ENCODE measurements at regions of chr9 and their contacts with region 1.

Region 1: GRCh38 chr9:121992571-121993212 is 100.4 kb downstream of the TTLL11 start:
- DNase-seq: no peak
- ATAC-seq: peak; percentile 80
- H3K4me3 Mint-ChIP-seq: no peak overlapping the region
- H3K27ac Mint-ChIP-seq: no peak overlapping the region
- H3K4me1 Mint-ChIP-seq: no peaks in the 10 kb centered on the region
- H3K27me3 Mint-ChIP-seq: no peaks in the 10 kb centered on the region
- CTCF ChIP-seq: peak; percentile 51

Region 2: DNA sequence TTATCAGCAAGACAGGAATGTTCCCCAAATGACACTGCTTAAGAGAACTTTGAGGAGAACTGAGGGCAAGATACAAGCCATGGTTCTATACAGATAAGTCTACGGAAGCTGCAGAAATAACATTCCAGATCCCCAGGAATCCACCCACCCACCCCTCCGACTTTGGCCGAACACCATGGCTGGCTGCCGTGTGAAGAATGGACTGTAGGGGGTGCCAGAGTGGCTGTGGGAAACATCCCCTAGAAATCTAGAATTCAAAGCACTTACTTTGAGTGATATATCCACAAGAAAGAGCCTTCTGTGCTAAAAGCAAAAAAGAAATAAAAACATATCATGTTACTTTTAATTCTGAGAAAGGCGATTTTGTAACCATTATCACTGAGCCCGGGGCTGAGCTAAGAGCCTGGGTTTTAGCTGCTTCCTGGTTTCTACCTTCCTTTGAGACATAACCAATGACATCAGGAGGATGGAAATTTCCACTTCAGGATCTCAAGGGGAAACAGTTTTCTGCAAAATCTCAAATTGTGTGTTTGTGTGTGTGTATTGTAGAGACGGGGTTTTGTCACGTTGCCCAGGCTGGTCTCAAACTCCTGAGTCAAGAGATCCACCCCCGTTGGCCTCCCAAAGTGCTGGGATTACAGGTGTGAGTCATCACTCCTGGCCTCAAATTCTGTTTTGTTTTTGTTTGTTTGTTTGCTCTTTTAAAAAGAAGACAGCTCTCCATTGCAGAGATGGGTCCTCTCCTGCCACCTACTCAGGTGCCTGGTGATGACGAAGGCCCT is 529.5 kb before region 1 on chr9:
- CTCF ChIA-PET with region 1: no interaction called
- POLR2A ChIA-PET with region 1: no interaction called
- intact Hi-C with region 1: loop called (anchors 5 kb)
- DNase-seq: no peak
- ATAC-seq: peak; percentile 58
- H3K4me3 Mint-ChIP-seq: no peak overlapping the region
- H3K27ac Mint-ChIP-seq: no peak overlapping the region
- H3K4me1 Mint-ChIP-seq: no peaks in the 10 kb centered on the region
- H3K27me3 Mint-ChIP-seq: peaks cover 35% of the 10 kb centered on the region
- CTCF ChIP-seq: no peak

Region 3: GRCh38 chr9:121474231-121474891 is 518.3 kb before region 1 on chr9:
- CTCF ChIA-PET with region 1: no interaction called
- POLR2A ChIA-PET with region 1: no interaction called
- intact Hi-C with region 1: no loop called
- DNase-seq: no peak
- ATAC-seq: no peak
- H3K4me3 Mint-ChIP-seq: no peak overlapping the region
- H3K27ac Mint-ChIP-seq: no peak overlapping the region
- H3K4me1 Mint-ChIP-seq: no peaks in the 10 kb centered on the region
- H3K27me3 Mint-ChIP-seq: peaks cover 21% of the 10 kb centered on the region
- CTCF ChIP-seq: no peak

Region 4: GRCh38 chr9:121545875-121546423 is 446.7 kb before region 1 on chr9:
- CTCF ChIA-PET with region 1: interaction called, 8 read pairs
- POLR2A ChIA-PET with region 1: no interaction called
- intact Hi-C with region 1: loop called (anchors 1 kb)
- DNase-seq: peak; percentile 68
- ATAC-seq: peak; percentile 86
- H3K4me3 Mint-ChIP-seq: no peak overlapping the region
- H3K27ac Mint-ChIP-seq: no peak overlapping the region
- H3K4me1 Mint-ChIP-seq: no peaks in the 10 kb centered on the region
- H3K27me3 Mint-ChIP-seq: peaks cover 24% of the 10 kb centered on the region
- CTCF ChIP-seq: no peak

Region 5: DNA sequence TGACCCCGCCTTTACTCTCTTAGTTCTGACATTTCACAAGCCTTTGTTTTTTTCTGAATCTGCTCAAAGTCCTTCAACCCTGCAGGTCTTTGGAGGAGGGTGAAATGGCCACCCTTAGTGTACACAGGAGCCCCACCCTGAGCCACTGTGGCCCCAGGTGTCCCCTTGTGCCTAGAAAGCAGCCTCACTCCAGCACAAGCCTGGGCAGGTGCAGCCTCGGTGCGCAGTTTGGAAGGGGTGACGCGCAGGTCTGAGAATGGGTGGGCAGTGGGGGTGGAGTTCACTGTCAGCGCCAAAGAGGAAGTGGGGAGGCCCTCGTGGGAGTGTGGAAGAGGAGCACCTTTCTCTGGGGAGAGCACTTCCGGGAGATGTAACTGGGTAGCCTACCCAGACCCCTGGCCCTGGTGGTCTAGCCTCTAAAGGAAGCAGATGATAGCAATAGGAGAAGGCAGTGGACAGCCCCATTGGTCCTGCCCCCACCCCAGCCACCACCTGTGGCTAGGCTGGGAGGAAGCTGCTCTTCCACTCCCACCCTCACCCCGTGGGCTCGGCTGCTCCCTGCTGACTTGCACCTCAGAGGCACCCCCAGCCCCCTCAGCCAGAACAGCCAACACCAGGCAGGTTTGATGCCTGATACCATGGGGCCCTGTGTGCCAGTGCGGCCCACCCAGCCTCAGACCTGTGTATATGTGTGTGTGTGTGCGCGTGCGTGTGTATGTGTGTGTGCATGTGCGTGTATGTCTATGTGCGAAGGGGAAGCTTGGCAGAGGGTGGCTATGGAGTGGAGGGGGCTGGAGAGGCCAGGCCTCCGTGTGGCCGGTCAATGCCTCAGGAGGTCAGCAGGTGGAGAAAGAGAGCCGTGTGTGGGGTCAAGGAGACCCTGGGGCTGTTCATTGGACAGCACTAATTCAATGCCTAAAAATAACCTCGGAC is 358.1 kb before region 1 on chr9:
- CTCF ChIA-PET with region 1: no interaction called
- POLR2A ChIA-PET with region 1: no interaction called
- intact Hi-C with region 1: loop called (anchors 1 kb)
- DNase-seq: no peak
- ATAC-seq: no peak
- H3K4me3 Mint-ChIP-seq: no peak overlapping the region
- H3K27ac Mint-ChIP-seq: no peak overlapping the region
- H3K4me1 Mint-ChIP-seq: peaks cover 4% of the 10 kb centered on the region
- H3K27me3 Mint-ChIP-seq: peaks cover 20% of the 10 kb centered on the region
- CTCF ChIP-seq: no peak

Region 6: DNA sequence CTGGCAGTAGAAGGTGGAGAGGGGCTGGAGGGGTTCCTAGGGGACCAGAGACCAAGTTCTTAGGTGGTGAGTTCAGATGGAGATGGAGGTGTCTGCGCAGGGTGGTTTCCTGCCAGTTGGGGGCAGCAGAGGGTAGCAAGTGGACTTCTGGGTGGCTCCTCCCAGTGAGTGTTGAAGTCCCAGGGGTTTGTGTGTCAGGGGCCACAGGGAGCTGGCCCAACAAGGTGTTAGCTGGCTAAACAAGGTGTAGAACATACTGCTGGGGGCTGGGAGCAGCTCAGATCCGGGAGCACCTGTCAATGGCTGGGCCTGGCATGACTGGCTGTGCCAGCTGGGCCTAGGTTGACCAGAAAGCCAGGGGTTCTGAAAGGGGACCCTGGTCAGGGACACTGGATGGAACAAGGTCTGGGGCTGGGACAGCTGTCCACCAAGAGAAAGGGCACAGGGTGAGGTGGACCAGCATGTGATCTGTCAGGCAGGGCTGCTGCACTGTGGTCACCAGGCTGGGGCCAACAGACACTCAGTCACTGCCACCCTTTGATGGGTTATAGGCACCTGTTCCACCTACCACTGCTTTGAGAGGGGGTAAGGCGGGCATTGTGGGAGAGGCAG is 305.7 kb before region 1 on chr9:
- CTCF ChIA-PET with region 1: interaction called, 5 read pairs
- POLR2A ChIA-PET with region 1: no interaction called
- intact Hi-C with region 1: loop called (anchors 1 kb)
- DNase-seq: peak; percentile 57
- ATAC-seq: peak; percentile 90
- H3K4me3 Mint-ChIP-seq: no peak overlapping the region
- H3K27ac Mint-ChIP-seq: no peak overlapping the region
- H3K4me1 Mint-ChIP-seq: no peaks in the 10 kb centered on the region
- H3K27me3 Mint-ChIP-seq: peaks cover 14% of the 10 kb centered on the region
- CTCF ChIP-seq: no peak

Region 7: GRCh38 chr9:121735065-121735789 is 257.5 kb before region 1 on chr9:
- CTCF ChIA-PET with region 1: interaction called, 5 read pairs
- POLR2A ChIA-PET with region 1: no interaction called
- intact Hi-C with region 1: loop called (anchors 1 kb)
- DNase-seq: no peak
- ATAC-seq: peak; percentile 75
- H3K4me3 Mint-ChIP-seq: peak overlapping the region; percentile 3
- H3K27ac Mint-ChIP-seq: no peak overlapping the region
- H3K4me1 Mint-ChIP-seq: peaks cover 15% of the 10 kb centered on the region
- H3K27me3 Mint-ChIP-seq: peaks cover 20% of the 10 kb centered on the region
- CTCF ChIP-seq: no peak

Region 8: GRCh38 chr9:121744002-121744686 is 248.5 kb before region 1 on chr9:
- CTCF ChIA-PET with region 1: no interaction called
- POLR2A ChIA-PET with region 1: no interaction called
- intact Hi-C with region 1: loop called (anchors 1 kb)
- DNase-seq: no peak
- ATAC-seq: peak; percentile 62
- H3K4me3 Mint-ChIP-seq: no peak overlapping the region
- H3K27ac Mint-ChIP-seq: no peak overlapping the region
- H3K4me1 Mint-ChIP-seq: peaks cover 2% of the 10 kb centered on the region
- H3K27me3 Mint-ChIP-seq: peaks cover 2% of the 10 kb centered on the region
- CTCF ChIP-seq: no peak

Region 9: DNA sequence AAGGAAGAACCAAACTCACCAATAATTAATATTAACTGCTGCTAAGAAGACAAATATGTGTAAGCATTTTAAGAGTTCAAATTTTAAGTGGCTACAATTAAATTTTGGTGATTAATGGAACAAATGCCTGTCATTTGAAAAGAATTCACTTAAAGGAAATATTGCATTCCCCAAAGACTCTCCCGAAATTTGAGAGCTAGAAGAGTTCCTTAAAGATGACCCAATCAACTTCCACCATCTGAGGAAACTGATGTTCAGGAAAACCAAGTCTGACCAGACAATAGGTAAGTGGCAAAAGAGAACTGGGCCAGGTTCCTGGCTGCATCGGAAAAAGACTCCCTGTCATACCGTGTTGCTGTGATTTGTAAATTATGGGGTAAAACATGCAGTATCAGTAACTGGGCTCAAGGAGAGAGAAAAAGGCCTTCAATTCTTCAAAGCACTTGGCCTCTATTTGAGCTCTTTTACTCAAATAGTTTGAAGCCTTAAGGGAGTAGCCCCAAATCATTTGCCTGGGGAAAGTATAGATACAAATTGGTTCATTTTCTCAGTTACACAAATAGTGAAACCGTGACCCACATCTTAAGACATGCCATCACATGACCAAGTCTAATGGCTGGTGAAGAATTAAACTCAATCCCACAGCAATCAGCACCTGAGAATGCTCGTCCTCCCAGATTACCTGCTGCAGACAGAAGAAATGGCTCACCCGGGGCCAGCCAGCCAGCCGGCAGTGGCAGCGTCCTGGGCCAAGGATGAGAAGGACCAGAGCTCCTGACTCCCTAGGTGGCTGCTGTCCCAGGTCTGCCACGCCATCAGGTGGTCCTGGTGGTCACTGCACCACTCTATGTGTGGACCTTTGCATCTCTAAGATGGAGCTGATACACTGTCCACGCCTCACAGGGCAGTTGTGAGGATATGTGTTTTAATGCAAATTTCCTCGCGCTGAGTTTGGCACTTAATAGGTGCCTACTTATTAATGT is 62.5 kb before region 1 on chr9:
- CTCF ChIA-PET with region 1: no interaction called
- POLR2A ChIA-PET with region 1: no interaction called
- intact Hi-C with region 1: no loop called
- DNase-seq: no peak
- ATAC-seq: no peak
- H3K4me3 Mint-ChIP-seq: no peak overlapping the region
- H3K27ac Mint-ChIP-seq: no peak overlapping the region
- H3K4me1 Mint-ChIP-seq: no peaks in the 10 kb centered on the region
- H3K27me3 Mint-ChIP-seq: no peaks in the 10 kb centered on the region
- CTCF ChIP-seq: no peak